Naive thymus-derived CD8-positive, alpha-beta T cell (primary cell): ENCODE measurements at regions of chr5 and their contacts with region 1.

Region 1: GRCh38 chr5:134370871-134371833 is at the start of gene UBE2B:
- DNase-seq: peak; percentile 94 to 99 (median 97)
- ATAC-seq: peak; percentile 68 to 75
- H3K4me3 Mint-ChIP-seq: peak within 1 kb of the TSS; percentile 88 to 99 (median 98)
- H3K27ac Mint-ChIP-seq: peak within 1 kb of the TSS; percentile 91 to 100 (median 100)
- H3K4me1 Mint-ChIP-seq: peaks cover 22 to 70% (median 61%) of the 10 kb centered on the region in 4 donors
- H3K27me3 Mint-ChIP-seq: peaks cover 0 to 3% (median 0%) of the 10 kb centered on the region in 5 donors
- polyA plus RNA-seq, gene UBE2B: 55.2 to 80.3 (median 77.6) TPM

Region 2: DNA sequence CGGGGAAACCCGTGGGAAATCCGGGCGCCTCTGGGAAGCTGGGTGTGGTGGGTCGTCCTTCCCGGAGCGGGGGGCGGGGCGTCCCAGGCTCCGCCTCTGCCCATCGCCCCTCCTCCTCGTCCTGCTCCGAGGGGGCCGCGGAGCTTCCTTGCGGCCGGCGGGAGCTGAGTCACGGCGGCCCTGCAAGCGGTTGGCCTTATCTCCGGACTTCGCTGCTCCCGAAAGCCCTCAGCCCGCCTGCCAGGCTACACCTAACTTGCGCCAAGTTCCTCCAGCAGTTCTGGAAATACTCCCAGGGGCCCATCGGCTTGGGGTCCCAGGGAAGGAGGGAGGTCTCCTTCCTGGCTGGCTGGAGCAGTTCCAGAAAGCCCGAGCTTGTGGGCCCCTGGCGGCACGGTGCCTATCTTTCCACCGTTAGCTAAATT is 94.7 kb after region 1 on chr5:
- POLR2A ChIA-PET with region 1: interaction called, 10 read pairs
- DNase-seq: peak in 8 of 10 donors; percentile 10 to 49 (median 36)
- ATAC-seq: peak; percentile 59 to 70
- H3K4me3 Mint-ChIP-seq: peak overlapping the region; percentile 78 to 89 (median 86)
- H3K27ac Mint-ChIP-seq: peak overlapping the region; percentile 81 to 92 (median 87)
- H3K4me1 Mint-ChIP-seq: peaks cover 7 to 33% (median 23%) of the 10 kb centered on the region in 4 donors
- H3K27me3 Mint-ChIP-seq: no peaks in the 10 kb centered on the region